Colonic mucosa (tissue), 4 donors: ENCODE measurements at regions of chr1 and their contacts with region 1.

Region 1: DNA sequence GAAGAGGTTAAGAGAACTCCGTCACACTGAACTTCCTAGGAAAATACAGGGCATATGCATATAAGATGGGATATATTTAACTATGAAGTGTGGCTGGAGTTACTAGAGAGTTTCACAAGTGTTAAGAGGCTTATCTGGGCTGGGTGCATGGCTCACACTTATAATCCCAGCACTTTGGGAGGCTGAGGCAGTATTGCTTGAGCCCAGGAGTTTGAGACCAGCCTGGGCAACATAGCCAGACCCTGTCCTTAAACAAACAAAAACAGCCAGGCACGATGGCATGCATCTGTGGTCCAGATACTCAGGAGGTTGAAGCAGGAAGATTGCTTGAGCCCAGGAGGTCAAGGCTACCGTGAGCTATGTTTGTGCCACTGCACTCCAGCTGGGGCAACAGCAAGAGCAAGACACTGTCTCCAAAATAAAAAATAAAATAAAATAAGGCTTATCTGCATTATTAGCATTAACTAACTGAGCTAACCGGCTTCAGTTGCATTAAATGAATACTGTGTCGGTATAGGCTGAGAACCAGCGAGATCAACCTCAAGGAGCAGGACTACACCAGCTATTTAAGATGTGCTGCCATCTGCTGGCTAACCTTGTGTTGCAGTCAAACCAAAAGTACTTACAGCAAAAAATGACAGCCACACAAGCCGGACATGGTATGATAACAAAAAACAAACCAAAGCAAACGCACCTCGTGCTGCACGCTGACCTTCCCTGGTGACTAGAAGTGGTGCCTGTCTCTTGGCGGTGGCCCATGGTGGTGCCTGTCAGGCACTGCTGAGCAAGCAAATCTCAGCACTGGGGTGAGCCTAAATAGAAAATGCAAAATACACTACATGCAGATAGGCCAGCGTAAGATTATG is 19.7 kb upstream of the RBBP5 start:
- DNase-seq: peak; percentile 80
- H3K4me3 ChIP-seq: no peak overlapping the region
- H3K27ac ChIP-seq: no peak overlapping the region
- H3K4me1 ChIP-seq: peaks cover 6% of the 10 kb centered on the region
- H3K27me3 ChIP-seq: no peaks in the 10 kb centered on the region
- CTCF ChIP-seq: peak; percentile 76

Region 2: DNA sequence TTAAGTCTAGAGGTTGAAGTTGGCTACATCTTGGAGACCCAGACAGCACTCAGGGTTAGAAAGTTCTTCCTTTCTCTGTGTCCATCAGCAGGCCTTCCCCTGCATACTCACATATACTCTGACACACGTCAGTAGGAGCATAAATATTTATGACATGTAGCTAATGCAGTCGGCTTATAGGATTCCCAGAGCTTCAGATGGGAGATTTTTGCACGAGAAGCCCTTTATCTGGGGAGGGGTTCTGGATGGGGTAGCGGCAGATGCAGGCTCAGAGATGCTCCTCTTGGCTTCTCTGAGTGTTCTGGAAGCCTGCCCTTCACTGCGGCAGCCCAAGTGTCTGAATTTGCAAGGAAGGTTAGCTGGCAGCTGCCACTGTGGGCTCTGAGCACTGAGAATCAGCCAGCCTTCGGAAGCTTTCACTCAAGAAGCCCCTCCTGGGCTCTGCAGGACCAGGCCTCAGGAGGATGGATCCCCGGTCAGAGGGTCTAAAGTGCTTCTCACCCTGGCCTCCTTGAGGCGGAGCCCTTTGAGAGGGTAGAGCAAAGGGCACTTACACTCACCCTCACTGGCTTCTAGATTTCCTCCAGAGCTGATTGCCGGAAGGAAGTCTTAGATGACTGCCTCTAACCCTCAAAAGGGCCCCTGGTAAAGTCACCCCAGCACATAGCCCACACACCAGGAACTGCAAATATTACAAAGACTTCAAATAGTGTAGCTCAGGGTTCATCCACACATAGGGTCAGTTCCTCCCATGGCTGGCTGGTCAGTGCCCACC is 338.9 kb before region 1 on chr1:
- intact Hi-C with region 1: no loop called
- DNase-seq: no peak
- H3K4me3 ChIP-seq: no peak overlapping the region
- H3K27ac ChIP-seq: no peak overlapping the region
- H3K4me1 ChIP-seq: no peaks in the 10 kb centered on the region
- H3K27me3 ChIP-seq: no peaks in the 10 kb centered on the region
- CTCF ChIP-seq: no peak

Region 3: GRCh38 chr1:204997591-204998355 is 143.7 kb before region 1 on chr1:
- intact Hi-C with region 1: no loop called
- DNase-seq: no peak
- H3K4me3 ChIP-seq: no peak overlapping the region
- H3K27ac ChIP-seq: no peak overlapping the region
- H3K4me1 ChIP-seq: no peaks in the 10 kb centered on the region
- H3K27me3 ChIP-seq: no peaks in the 10 kb centered on the region
- CTCF ChIP-seq: no peak

Region 4: GRCh38 chr1:205190845-205191577 is 49.5 kb after region 1 on chr1:
- intact Hi-C with region 1: no loop called
- DNase-seq: peak; percentile 26
- H3K4me3 ChIP-seq: no peak overlapping the region
- H3K27ac ChIP-seq: no peak overlapping the region
- H3K4me1 ChIP-seq: peaks cover 12% of the 10 kb centered on the region
- H3K27me3 ChIP-seq: no peaks in the 10 kb centered on the region
- CTCF ChIP-seq: no peak

Region 5: GRCh38 chr1:205255941-205256780 is 114.7 kb after region 1 on chr1:
- intact Hi-C with region 1: loop called (anchors 10 kb)
- DNase-seq: peak; percentile 93
- H3K4me3 ChIP-seq: no peak overlapping the region
- H3K27ac ChIP-seq: no peak overlapping the region
- H3K4me1 ChIP-seq: no peaks in the 10 kb centered on the region
- H3K27me3 ChIP-seq: no peaks in the 10 kb centered on the region
- CTCF ChIP-seq: peak; percentile 95